Calu3 (cell line): ENCODE measurements at regions of chr2 and their contacts with region 1.

Region 1: DNA sequence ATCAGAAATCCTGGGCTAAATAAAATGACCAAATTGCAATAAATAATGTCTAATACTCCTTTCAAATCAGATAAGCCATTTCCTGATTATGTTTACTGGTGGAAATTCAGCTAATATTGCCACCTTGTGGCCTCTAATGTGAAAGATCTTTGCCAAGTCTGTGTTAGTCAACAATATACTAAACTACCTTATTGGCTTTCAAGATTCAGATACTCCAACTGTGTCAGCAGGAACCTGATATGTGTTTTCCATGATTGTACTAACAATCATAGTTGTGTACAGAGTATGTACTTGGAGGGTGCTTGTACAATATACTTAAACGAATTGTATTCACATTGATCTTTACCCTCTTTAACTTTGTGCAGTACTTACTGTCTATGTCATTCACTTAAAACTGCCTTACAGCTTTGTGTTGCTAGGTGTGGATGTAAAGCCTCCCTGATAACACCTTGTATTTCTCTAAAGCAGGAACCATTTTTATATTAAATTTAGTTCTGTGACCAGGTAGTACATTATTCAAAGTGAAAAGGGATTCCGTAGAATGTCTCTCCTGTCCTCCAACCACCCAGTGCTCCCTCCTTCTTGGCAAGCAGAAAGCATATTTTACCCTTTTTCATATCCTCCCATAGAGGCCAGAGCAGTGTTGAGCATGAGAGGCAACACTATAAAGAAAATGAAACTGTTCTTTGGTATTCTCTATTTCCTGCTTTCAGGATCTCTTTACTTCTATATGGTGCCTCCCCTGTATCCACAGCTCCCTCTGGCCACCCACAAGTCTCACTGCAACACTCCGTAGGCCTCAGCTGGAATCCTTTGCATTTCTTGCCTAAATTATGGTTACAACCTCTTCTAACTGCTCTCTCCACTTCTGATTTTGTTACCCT is 75.2 kb upstream of the C2orf15 start:
- DNase-seq: peak; percentile 51
- H3K4me3 Mint-ChIP-seq: no peak overlapping the region
- H3K27ac Mint-ChIP-seq: no peak overlapping the region
- H3K4me1 Mint-ChIP-seq: no peaks in the 10 kb centered on the region
- H3K27me3 Mint-ChIP-seq: no peaks in the 10 kb centered on the region
- CTCF ChIP-seq: peak; percentile 31

Region 2: GRCh38 chr2:98568881-98569793 is 497.2 kb before region 1 on chr2:
- CTCF ChIA-PET with region 1: no interaction called
- intact Hi-C with region 1: no loop called
- DNase-seq: peak; percentile 55
- H3K4me3 Mint-ChIP-seq: no peak overlapping the region
- H3K27ac Mint-ChIP-seq: no peak overlapping the region
- H3K4me1 Mint-ChIP-seq: no peaks in the 10 kb centered on the region
- H3K27me3 Mint-ChIP-seq: no peaks in the 10 kb centered on the region
- CTCF ChIP-seq: peak; percentile 89

Region 3: DNA sequence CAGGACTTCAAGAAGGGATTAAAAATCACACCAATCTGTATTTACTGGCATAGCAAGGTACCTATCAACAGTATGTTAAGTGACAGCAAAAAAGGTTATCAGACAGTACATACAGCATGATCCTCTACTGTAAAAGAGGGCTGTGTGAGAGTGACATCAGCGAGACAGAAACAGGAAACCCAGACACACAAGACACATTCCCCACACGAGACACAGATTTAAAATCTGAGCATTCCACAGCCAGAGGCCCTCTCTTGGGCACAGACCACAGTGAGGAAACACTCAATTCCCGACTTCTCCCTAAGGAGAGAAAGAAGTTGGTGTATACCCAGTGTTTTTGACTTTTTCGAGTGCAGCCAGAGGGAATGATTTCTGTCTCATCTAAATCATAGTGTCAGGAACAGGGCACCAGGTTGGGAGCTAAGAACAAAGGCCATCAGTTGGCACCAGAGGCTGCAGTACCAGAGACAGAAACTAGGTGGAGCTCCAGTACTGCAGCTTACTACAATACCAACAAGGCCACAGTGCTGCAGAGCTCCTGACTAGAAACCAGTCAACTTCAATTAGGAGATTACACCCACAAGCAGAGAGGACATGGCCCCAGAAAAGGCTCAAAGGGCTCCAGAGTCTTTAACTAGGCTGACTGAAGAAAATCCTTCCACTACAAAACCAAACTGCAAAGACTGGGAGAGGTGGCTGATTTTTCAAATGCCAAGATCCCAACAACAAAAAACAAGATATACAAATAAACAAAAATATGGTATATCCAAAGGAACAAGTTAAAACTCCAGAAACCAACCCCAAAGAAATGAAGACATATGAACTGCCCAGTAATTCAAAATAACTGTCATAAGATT is 417.0 kb before region 1 on chr2:
- CTCF ChIA-PET with region 1: interaction called, 20 read pairs
- intact Hi-C with region 1: loop called (anchors 1 kb)
- DNase-seq: peak; percentile 75
- H3K4me3 Mint-ChIP-seq: no peak overlapping the region
- H3K27ac Mint-ChIP-seq: no peak overlapping the region
- H3K4me1 Mint-ChIP-seq: peaks cover 7% of the 10 kb centered on the region
- H3K27me3 Mint-ChIP-seq: no peaks in the 10 kb centered on the region
- CTCF ChIP-seq: peak; percentile 94